PC-3 (cell line): ENCODE measurements at regions of chr13 and their contacts with region 1.

Region 1: DNA sequence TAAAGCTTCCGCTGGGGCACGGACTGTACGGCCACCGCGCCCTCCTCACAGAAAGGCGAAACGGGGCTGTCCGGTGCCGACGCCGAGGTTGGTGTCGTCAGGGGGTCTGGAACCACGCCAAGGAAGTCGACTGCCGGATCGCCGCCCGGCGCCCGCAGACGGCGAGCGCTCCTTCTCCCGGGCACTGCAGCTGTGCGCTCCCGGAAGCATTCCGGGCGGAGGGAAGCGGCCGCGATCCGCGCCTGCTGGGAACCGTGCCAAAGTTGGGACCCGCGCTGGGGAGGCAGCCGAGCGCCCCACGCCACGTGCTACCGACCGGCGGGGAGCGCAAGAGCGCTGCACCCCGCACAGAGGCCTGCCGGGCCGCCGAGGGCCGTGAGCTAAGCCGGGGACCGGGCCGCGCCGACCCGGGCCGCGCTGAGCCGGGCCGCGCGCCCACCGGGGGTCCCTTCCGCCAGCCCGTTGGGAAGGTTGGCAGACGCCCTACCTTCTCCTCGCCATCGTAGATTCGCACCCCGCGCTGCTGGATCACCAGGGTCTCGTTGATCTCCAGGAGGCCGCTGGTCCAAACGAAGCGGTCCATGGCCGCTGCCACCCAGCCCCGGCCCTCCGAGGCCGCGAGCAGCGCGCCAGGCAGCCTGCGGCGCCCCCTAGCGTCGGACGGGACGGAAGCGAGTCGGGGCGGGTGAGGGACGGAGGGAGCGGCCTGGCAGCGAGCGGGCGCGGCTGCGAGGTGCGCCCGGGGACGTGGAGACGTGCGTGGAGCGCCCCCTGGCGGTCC is at the start of gene VPS36:
- DNase-seq: peak; percentile 92
- ATAC-seq: peak; percentile 80
- H3K4me3 ChIP-seq: peak within 1 kb of the TSS; percentile 99
- H3K27ac ChIP-seq: peak within 1 kb of the TSS; percentile 49
- H3K4me1 ChIP-seq: peaks cover 16% of the 10 kb centered on the region; the same call in 1 of the 2 replicates
- H3K27me3 ChIP-seq: no peaks in the 10 kb centered on the region
- CTCF ChIP-seq: peak; percentile 88
- total RNA-seq, gene VPS36: 10.1 and 11.1 TPM in 2 replicates

Region 2: GRCh38 chr13:52344108-52344507 is 106.1 kb before region 1 on chr13:
- CTCF ChIA-PET with region 1: interaction called, 11 read pairs
- POLR2A ChIA-PET with region 1: no interaction called
- intact Hi-C with region 1: loop called (anchors 1 kb)
- DNase-seq: no peak
- ATAC-seq: no peak
- H3K4me3 ChIP-seq: no peak overlapping the region
- H3K27ac ChIP-seq: no peak overlapping the region
- H3K4me1 ChIP-seq: peaks cover 8% of the 10 kb centered on the region
- H3K27me3 ChIP-seq: no peaks in the 10 kb centered on the region
- CTCF ChIP-seq: no peak

Region 3: GRCh38 chr13:52399708-52400107 is 50.5 kb before region 1 on chr13:
- CTCF ChIA-PET with region 1: no interaction called
- POLR2A ChIA-PET with region 1: no interaction called
- intact Hi-C with region 1: loop called (anchors 2 kb)
- DNase-seq: no peak
- ATAC-seq: no peak
- H3K4me3 ChIP-seq: no peak overlapping the region
- H3K27ac ChIP-seq: no peak overlapping the region
- H3K4me1 ChIP-seq: peaks cover 4% of the 10 kb centered on the region; the same call in 1 of the 2 replicates
- H3K27me3 ChIP-seq: no peaks in the 10 kb centered on the region
- CTCF ChIP-seq: no peak; the same call in 1 of the 2 replicates

Region 4: GRCh38 chr13:52652196-52652979 is 202.2 kb after region 1 on chr13 and contains the start of gene SUGT1:
- CTCF ChIA-PET with region 1: no interaction called
- POLR2A ChIA-PET with region 1: no interaction called
- intact Hi-C with region 1: loop called (anchors 5 kb)
- DNase-seq: peak; percentile 92
- ATAC-seq: peak; percentile 97
- H3K4me3 ChIP-seq: peak within 1 kb of the TSS; percentile 97
- H3K27ac ChIP-seq: peak within 1 kb of the TSS; percentile 93
- H3K4me1 ChIP-seq: peaks cover 18% of the 10 kb centered on the region
- H3K27me3 ChIP-seq: no peaks in the 10 kb centered on the region
- CTCF ChIP-seq: peak; percentile 55
- total RNA-seq, gene SUGT1: 26.0 and 29.3 TPM in 2 replicates

Region 5: GRCh38 chr13:52779103-52779502 is 328.9 kb after region 1 on chr13:
- CTCF ChIA-PET with region 1: no interaction called
- POLR2A ChIA-PET with region 1: no interaction called
- intact Hi-C with region 1: no loop called
- DNase-seq: no peak
- ATAC-seq: no peak
- H3K4me3 ChIP-seq: no peak overlapping the region
- H3K27ac ChIP-seq: no peak overlapping the region
- H3K4me1 ChIP-seq: no peaks in the 10 kb centered on the region
- H3K27me3 ChIP-seq: peaks cover 33% of the 10 kb centered on the region; the same call in 1 of the 2 replicates
- CTCF ChIP-seq: no peak